ENCODE measurements at regions of chr2 and their contacts with region 1.

Region 1: GRCh38 chr2:172806493-172806892 is 70.8 kb downstream of the RAPGEF4 start:
- DNase-seq: no peak
- H3K4me3 ChIP-seq: peak overlapping the region in 1 of 4 donors; percentile 4
- H3K27ac ChIP-seq: no peak overlapping the region
- H3K4me1 ChIP-seq: peaks cover 0 to 11% (median 7%) of the 10 kb centered on the region in 4 donors
- H3K27me3 ChIP-seq: no peaks in the 10 kb centered on the region
- CTCF ChIP-seq: peak; percentile 55 to 79 (median 74)
- EP300 ChIP-seq: no peak
- POLR2A ChIP-seq: no peak

Region 2: GRCh38 chr2:172864182-172864581 is 57.7 kb after region 1 on chr2:
- intact Hi-C with region 1: loop called (anchors 5 kb)
- DNase-seq: peak; percentile 69
- H3K4me3 ChIP-seq: no peak overlapping the region
- H3K27ac ChIP-seq: no peak overlapping the region
- H3K4me1 ChIP-seq: peaks cover 0 to 10% (median 4%) of the 10 kb centered on the region in 4 donors
- H3K27me3 ChIP-seq: no peaks in the 10 kb centered on the region
- CTCF ChIP-seq: peak; percentile 54 to 72 (median 60)
- EP300 ChIP-seq: no peak
- POLR2A ChIP-seq: no peak

Region 3: GRCh38 chr2:172931918-172932520 is 125.5 kb after region 1 on chr2:
- intact Hi-C with region 1: loop called (anchors 1 kb)
- DNase-seq: peak; percentile 73
- H3K4me3 ChIP-seq: peak overlapping the region in 3 of 4 donors; percentile 24 to 32 (median 28)
- H3K27ac ChIP-seq: peak overlapping the region; percentile 48 to 72 (median 54)
- H3K4me1 ChIP-seq: peaks cover 0 to 45% (median 27%) of the 10 kb centered on the region in 4 donors
- H3K27me3 ChIP-seq: no peaks in the 10 kb centered on the region
- CTCF ChIP-seq: peak; percentile 19 to 72 (median 54)
- EP300 ChIP-seq: no peak
- POLR2A ChIP-seq: no peak